Left ventricle myocardium inferior (tissue), 1 donor: ENCODE measurements at regions of chr6 and their contacts with region 1.

Region 1: DNA sequence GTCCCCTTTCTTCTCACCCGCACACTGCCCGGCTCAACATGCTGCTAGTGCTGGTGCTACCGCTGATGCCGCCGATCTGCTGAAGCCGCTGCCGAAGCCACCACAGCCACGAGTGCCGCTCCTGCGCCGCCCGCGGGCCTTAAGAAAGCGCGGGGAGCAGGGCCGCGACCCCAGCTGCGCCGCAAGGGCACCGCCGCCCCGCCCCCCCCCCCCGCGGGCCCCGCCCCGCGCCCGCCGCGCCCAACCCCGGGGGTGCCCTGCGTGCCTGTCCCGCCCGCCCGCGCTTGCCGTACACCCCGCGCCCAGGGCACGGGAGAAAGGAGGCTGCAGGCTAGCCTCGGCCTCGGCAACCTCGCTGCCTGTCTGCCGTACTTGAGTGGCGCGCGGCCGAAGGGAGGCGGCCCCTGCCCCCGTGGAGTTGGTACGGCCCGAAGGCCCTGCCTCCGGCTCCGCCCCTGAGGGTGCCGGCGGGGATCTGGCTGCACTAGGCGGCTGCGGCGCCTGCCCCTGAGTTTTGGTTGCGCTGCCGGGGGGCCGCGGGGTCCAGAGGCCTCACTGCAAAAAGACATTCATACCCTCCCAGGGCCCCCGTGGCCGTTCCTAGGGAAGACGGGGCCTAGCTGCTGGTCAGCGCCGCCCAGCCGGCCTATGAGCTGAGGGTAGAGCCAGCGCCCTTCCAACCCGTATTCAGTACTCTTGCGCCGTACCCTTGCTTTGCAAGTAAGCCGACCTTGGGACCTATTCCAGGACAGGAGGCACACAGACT is at the start of gene SOD2:
- DNase-seq: peak; percentile 87
- H3K4me3 ChIP-seq: peak within 1 kb of the TSS; percentile 99
- H3K27ac ChIP-seq: peak within 1 kb of the TSS; percentile 100
- H3K4me1 ChIP-seq: peaks cover 69% of the 10 kb centered on the region
- H3K27me3 ChIP-seq: no peaks in the 10 kb centered on the region
- CTCF ChIP-seq: peak; percentile 4
- total RNA-seq, gene SOD2: 1,000 TPM

Region 2: DNA sequence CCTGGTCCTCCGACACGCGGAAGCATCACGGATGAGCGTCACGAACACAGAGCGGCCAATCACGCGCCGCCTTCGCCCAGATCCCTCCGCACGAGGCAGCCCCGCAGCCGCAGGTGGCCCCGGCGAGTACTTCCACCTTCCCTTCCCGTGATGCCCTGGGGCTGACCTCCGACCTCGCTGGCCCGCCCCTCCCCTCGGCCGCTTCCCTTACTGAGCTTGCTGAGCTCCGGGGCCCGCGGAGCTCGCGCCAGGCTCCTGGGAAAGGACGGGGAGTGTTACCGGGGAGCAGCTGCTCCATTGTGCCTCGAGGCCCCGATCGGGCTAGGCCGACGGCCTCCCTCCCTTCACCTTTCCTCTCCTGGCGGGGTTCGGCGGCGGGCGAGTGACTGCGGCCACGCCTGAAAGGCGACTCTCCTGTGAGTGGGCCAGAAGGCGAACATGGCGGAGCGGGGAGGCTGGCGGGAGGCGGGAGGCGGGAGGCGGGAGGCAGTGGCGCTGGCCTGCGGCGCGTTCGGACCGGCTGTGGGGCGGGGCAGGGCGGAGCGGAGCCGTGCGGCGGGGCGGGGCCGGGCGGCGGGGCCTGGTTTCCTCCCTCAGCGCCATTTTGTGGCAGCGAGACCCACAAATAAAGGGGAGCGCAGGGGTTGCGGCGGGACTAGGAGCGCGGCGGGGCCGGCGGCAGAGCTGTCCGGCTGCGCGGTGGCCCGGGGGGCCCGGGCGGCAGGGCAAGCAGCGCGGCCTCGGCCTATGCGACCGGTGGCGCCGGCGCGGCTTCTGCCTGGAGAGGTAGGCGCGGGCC is 33.8 kb after region 1 on chr6 and contains the start of gene WTAP:
- intact Hi-C with region 1: loop called (anchors 5 kb)
- DNase-seq: peak; percentile 96
- H3K4me3 ChIP-seq: peak within 1 kb of the TSS; percentile 81
- H3K27ac ChIP-seq: peak within 1 kb of the TSS; percentile 99
- H3K4me1 ChIP-seq: peaks cover 71% of the 10 kb centered on the region
- H3K27me3 ChIP-seq: no peaks in the 10 kb centered on the region
- CTCF ChIP-seq: no peak
- total RNA-seq, gene WTAP: 47.5 TPM